Right cardiac atrium (tissue), 5 donors: ENCODE measurements at regions of chr9 and their contacts with region 1.

Region 1: DNA sequence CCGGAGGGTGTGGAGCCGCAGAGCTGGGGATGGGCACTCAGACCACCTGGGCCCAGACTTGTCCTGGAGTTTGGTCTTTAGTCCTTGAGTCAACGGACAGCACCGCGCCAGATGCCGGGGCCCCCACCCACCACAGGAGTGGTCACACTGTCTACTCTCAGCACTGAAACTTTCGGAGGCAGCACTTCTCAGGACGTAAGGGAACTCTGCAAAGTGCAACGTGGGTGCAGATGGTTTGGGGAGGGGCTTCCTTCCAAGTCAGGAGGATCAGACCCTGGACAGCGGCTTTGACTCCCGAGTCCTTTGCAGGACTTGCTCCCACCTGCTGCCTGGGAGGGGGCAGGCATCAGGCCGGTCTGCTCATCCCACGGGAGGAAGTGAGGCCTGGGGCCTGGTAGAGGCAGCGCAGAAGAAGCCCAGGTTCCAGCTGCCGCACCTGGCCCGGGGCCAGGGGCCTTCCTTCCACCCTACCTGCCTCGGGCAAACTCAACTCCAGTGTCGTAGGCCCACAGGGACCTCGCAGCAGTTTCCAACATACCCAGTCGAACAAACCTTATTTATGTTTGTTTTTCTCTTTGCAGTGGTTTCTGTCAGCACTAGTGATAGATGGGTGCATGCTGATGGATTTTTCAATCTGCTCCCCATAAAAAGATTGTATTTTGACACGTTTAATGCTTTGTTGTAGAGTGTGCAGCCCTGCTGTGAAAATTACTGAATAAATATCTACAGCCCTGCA is 149.8 kb upstream of the PPP1R26 start:
- DNase-seq: peak in 1 of 3 donors; percentile 21
- ATAC-seq: no peak
- H3K4me3 ChIP-seq: no peak overlapping the region
- H3K27ac ChIP-seq: no peak overlapping the region
- H3K4me1 ChIP-seq: no peaks in the 10 kb centered on the region
- H3K27me3 ChIP-seq: no peaks in the 10 kb centered on the region

Region 2: GRCh38 chr9:135309763-135310125 is 20.0 kb before region 1 on chr9:
- intact Hi-C with region 1: loop called in 1 of 4 experiments (anchors 2 kb)
- DNase-seq: no peak
- ATAC-seq: no peak
- H3K4me3 ChIP-seq: no peak overlapping the region
- H3K27ac ChIP-seq: no peak overlapping the region
- H3K4me1 ChIP-seq: no peaks in the 10 kb centered on the region
- H3K27me3 ChIP-seq: no peaks in the 10 kb centered on the region